GM12878 (cell line): ENCODE measurements at regions of chr22 and their contacts with region 1.

Region 1: GRCh38 chr22:40636380-40637182 is at the start of gene MRTFA:
- DNase-seq: peak; percentile 99
- ATAC-seq: peak; percentile 95
- H3K4me3 ChIP-seq: peak within 1 kb of the TSS; percentile 85
- H3K27ac ChIP-seq: peak within 1 kb of the TSS; percentile 79
- H3K4me1 ChIP-seq: peaks cover 6% of the 10 kb centered on the region
- H3K27me3 ChIP-seq: no peaks in the 10 kb centered on the region
- CTCF ChIP-seq: 0 out of 6 replicates have a peak, but pooled peaks of 1 of the 3 experiments have one; percentile 0
- EP300 ChIP-seq: no peak
- POLR2A ChIP-seq: peak; percentile 99
- RAD21 ChIP-seq: no peak
- polyA plus RNA-seq, gene MRTFA: 2.0 to 2.6 TPM

Region 2: GRCh38 chr22:40572976-40573375 is 63.6 kb before region 1 on chr22:
- CTCF ChIA-PET with region 1: no interaction called
- POLR2A ChIA-PET with region 1: no interaction called
- RAD21 ChIA-PET with region 1: no interaction called
- SMC1A ChIA-PET with region 1: no interaction called
- in situ Hi-C with region 1: no loop called
- intact Hi-C with region 1: no loop called
- DNase-seq: no peak
- ATAC-seq: no peak
- H3K4me3 ChIP-seq: no peak overlapping the region
- H3K27ac ChIP-seq: no peak overlapping the region
- H3K4me1 ChIP-seq: no peaks in the 10 kb centered on the region
- H3K27me3 ChIP-seq: no peaks in the 10 kb centered on the region
- CTCF ChIP-seq: no peak
- EP300 ChIP-seq: no peak
- POLR2A ChIP-seq: no peak
- RAD21 ChIP-seq: no peak

Region 3: GRCh38 chr22:40583053-40583741 is 53.4 kb before region 1 on chr22:
- CTCF ChIA-PET with region 1: interaction called, 4 read pairs
- POLR2A ChIA-PET with region 1: interaction called, 5 read pairs
- RAD21 ChIA-PET with region 1: interaction called, 11 read pairs
- SMC1A ChIA-PET with region 1: interaction called, 19 read pairs
- in situ Hi-C with region 1: no loop called
- intact Hi-C with region 1: no loop called
- DNase-seq: no peak
- ATAC-seq: peak; percentile 84
- H3K4me3 ChIP-seq: peak overlapping the region; percentile 12; the same call in 1 of the 2 replicates
- H3K27ac ChIP-seq: peak overlapping the region; percentile 28
- H3K4me1 ChIP-seq: peaks cover 36% of the 10 kb centered on the region
- H3K27me3 ChIP-seq: no peaks in the 10 kb centered on the region
- CTCF ChIP-seq: no peak
- EP300 ChIP-seq: no peak; a peak in 1 of 4 replicates
- POLR2A ChIP-seq: no peak
- RAD21 ChIP-seq: no peak

Region 4: DNA sequence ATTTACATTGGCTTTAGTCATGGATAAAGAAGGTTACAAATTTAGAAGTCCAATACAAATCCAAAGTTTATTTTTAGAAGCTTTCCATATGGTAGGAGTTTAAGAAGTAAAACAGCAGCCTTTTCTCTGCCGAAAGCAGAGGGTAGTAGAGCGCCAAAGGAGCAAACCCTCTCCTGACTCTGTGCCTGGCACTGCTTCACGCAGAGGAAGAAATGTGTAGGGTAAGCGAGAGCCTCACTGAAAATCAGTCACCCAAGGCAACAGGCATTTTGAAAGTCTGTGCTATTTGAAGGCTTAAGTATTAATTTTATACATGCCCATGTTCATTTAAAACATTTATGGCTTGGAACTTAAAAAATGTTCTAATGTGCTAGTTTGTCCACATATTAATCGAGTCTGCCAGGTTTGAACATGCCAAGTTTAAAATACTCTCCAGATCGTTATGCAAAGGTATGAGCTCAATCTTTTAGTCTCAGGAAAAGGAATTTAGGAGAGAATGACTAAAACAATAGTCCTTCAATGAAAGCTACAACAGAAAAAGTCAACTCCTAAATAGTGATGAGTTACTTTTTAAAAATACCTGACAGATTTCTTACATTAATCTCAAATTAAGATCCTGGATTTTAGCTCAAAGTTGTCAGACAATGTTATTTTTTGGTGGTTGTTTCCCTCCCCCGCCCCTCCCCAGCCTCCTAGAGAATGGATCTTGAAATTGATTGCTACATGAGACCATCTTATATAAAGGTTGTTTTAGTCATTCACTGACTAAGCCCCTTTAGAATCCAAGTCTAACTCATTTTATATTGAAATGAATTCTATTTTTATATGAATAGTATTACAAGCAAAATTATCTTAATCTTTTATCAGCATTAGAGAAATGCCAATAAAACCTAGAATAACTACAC is 38.8 kb before region 1 on chr22:
- CTCF ChIA-PET with region 1: interaction called, 8 read pairs
- POLR2A ChIA-PET with region 1: interaction called, 6 read pairs
- RAD21 ChIA-PET with region 1: interaction called, 7 read pairs
- SMC1A ChIA-PET with region 1: interaction called, 9 read pairs
- in situ Hi-C with region 1: no loop called
- intact Hi-C with region 1: loop called (anchors 5 kb)
- DNase-seq: no peak
- ATAC-seq: no peak
- H3K4me3 ChIP-seq: no peak overlapping the region
- H3K27ac ChIP-seq: no peak overlapping the region; the same call in 1 of the 2 replicates
- H3K4me1 ChIP-seq: peaks cover 54% of the 10 kb centered on the region
- H3K27me3 ChIP-seq: no peaks in the 10 kb centered on the region
- CTCF ChIP-seq: 0 out of 6 replicates have a peak, but pooled peaks of 1 of the 3 experiments have one; percentile 0
- EP300 ChIP-seq: no peak
- POLR2A ChIP-seq: no peak
- RAD21 ChIP-seq: no peak

Region 5: GRCh38 chr22:40605676-40606250 is 30.8 kb before region 1 on chr22:
- CTCF ChIA-PET with region 1: interaction called, 6 read pairs
- POLR2A ChIA-PET with region 1: interaction called, 5 read pairs
- RAD21 ChIA-PET with region 1: interaction called, 5 read pairs
- SMC1A ChIA-PET with region 1: interaction called, 11 read pairs
- in situ Hi-C with region 1: no loop called
- intact Hi-C with region 1: no loop called
- DNase-seq: no peak
- ATAC-seq: no peak
- H3K4me3 ChIP-seq: no peak overlapping the region
- H3K27ac ChIP-seq: no peak overlapping the region
- H3K4me1 ChIP-seq: no peaks in the 10 kb centered on the region
- H3K27me3 ChIP-seq: no peaks in the 10 kb centered on the region
- CTCF ChIP-seq: no peak
- EP300 ChIP-seq: no peak
- POLR2A ChIP-seq: no peak
- RAD21 ChIP-seq: no peak

Region 6: GRCh38 chr22:40620464-40621046 is 16.0 kb before region 1 on chr22:
- CTCF ChIA-PET with region 1: interaction called, 3 read pairs
- POLR2A ChIA-PET with region 1: interaction called, 6 read pairs
- RAD21 ChIA-PET with region 1: no interaction called
- SMC1A ChIA-PET with region 1: interaction called, 10 read pairs
- in situ Hi-C with region 1: no loop called
- intact Hi-C with region 1: no loop called
- DNase-seq: no peak
- ATAC-seq: no peak
- H3K4me3 ChIP-seq: no peak overlapping the region
- H3K27ac ChIP-seq: no peak overlapping the region
- H3K4me1 ChIP-seq: no peaks in the 10 kb centered on the region
- H3K27me3 ChIP-seq: no peaks in the 10 kb centered on the region
- CTCF ChIP-seq: no peak
- EP300 ChIP-seq: no peak
- POLR2A ChIP-seq: no peak
- RAD21 ChIP-seq: no peak

Region 7: GRCh38 chr22:40673017-40673416 is 36.4 kb after region 1 on chr22:
- CTCF ChIA-PET with region 1: no interaction called
- POLR2A ChIA-PET with region 1: no interaction called
- RAD21 ChIA-PET with region 1: no interaction called
- SMC1A ChIA-PET with region 1: no interaction called
- in situ Hi-C with region 1: no loop called
- intact Hi-C with region 1: no loop called
- DNase-seq: no peak
- ATAC-seq: no peak
- H3K4me3 ChIP-seq: no peak overlapping the region
- H3K27ac ChIP-seq: no peak overlapping the region
- H3K4me1 ChIP-seq: no peaks in the 10 kb centered on the region
- H3K27me3 ChIP-seq: no peaks in the 10 kb centered on the region
- CTCF ChIP-seq: no peak
- EP300 ChIP-seq: no peak
- POLR2A ChIP-seq: no peak
- RAD21 ChIP-seq: no peak

Region 8: DNA sequence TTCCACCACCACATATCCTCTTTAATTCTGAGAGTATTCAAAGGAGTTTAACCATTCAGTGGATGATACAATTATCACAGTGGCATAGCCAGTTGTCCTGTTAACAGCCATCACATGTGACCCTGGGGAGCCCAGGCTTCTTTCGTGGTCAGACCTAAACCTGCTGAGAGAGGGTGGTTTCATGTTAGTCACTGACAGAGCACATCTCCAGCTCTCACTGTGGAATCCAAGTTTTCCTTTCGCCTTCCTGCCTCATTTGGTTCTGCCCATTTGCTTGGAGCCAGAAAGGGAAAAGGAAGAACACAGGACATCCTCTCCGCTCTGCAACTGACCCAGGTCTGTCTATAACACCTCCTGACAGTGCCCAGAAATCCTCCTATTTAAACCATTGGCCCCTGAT is 103.1 kb after region 1 on chr22:
- CTCF ChIA-PET with region 1: no interaction called
- POLR2A ChIA-PET with region 1: no interaction called
- RAD21 ChIA-PET with region 1: no interaction called
- SMC1A ChIA-PET with region 1: no interaction called
- in situ Hi-C with region 1: no loop called
- intact Hi-C with region 1: no loop called
- DNase-seq: no peak
- ATAC-seq: no peak
- H3K4me3 ChIP-seq: no peak overlapping the region
- H3K27ac ChIP-seq: no peak overlapping the region
- H3K4me1 ChIP-seq: no peaks in the 10 kb centered on the region
- H3K27me3 ChIP-seq: no peaks in the 10 kb centered on the region
- CTCF ChIP-seq: no peak
- EP300 ChIP-seq: no peak
- POLR2A ChIP-seq: no peak
- RAD21 ChIP-seq: no peak